A673 (cell line): ENCODE measurements at regions of chr13 and their contacts with region 1.

Region 1: DNA sequence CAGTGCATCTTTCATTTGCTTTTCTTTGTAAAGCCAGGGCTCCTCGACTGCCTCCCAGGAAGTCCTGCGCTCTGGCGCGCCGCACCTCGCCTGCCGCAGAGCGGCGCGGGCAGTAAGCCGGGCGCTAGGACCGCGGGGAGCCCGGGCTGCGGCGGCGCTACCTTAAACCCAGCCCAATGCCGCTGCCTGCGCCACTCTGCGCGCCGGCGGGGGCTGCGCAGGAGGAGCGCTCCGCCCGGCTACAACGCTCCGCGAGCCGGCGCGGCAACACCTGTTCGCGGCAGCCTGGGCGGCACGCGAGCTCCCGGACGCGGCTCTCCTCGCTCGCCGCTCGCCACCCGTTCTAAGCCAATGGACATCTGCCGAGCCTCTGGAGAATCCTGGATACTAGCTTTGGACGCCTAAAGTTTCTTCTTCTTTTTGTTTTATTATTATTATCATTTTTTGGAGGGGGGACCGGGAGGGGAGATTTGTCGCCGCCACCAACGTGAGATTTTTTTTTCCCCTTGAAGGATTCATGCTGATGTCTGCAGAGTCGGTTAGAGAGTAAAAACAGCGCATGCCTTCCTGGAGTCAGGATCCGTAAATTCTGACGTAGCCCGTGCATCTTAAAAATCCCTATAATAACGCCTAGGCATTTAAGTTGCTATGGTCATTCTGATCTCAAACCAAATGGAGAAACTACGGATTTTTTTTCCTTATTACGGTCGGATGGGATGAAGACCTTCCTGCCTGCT is at the start of gene FGF9:
- DNase-seq: peak; percentile 82
- H3K4me3 ChIP-seq: peak within 1 kb of the TSS; percentile 57
- H3K27ac ChIP-seq: no peak within 1 kb of the TSS
- H3K4me1 ChIP-seq: peaks cover 36% of the 10 kb centered on the region
- H3K27me3 ChIP-seq: peaks cover 57% of the 10 kb centered on the region
- CTCF ChIP-seq: no peak; the same call in 1 of the 2 replicates
- total RNA-seq, gene FGF9: 0.21 and 0.35 TPM in 2 replicates

Region 2: DNA sequence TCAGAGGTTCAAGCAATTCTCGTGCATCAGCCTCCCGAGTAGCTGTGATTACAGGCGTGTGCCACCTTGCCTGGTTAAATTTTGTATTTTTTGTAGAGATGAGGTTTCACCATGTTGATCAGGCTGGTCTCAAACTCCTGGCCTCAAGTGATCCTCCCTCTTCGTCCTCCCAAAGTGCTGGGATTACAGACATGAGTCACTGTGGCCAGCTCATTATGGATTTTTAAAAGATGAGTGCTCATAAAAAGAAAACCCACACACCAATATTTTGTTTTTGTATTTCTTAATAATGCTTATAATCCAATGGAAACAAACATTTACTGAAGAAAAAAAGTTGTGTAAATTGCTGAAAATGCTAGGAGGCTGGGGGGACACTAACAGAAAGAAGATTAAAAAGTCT is 62.1 kb before region 1 on chr13:
- CTCF ChIA-PET with region 1: no interaction called
- POLR2A ChIA-PET with region 1: no interaction called
- intact Hi-C with region 1: loop called (anchors 5 kb)
- DNase-seq: no peak
- H3K4me3 ChIP-seq: no peak overlapping the region
- H3K27ac ChIP-seq: no peak overlapping the region
- H3K4me1 ChIP-seq: no peaks in the 10 kb centered on the region
- H3K27me3 ChIP-seq: no peaks in the 10 kb centered on the region
- CTCF ChIP-seq: no peak

Region 3: GRCh38 chr13:21616880-21617279 is 54.2 kb before region 1 on chr13:
- CTCF ChIA-PET with region 1: no interaction called
- POLR2A ChIA-PET with region 1: no interaction called
- intact Hi-C with region 1: loop called (anchors 5 kb)
- DNase-seq: no peak
- H3K4me3 ChIP-seq: no peak overlapping the region
- H3K27ac ChIP-seq: no peak overlapping the region
- H3K4me1 ChIP-seq: peaks cover 3% of the 10 kb centered on the region
- H3K27me3 ChIP-seq: no peaks in the 10 kb centered on the region
- CTCF ChIP-seq: no peak